Activated naive CD4-positive, alpha-beta T cell treated with anti-CD3 and anti-CD28 coated beads for 36 hours (primary cell): ENCODE measurements at regions of chr17 and their contacts with region 1.

Region 1: DNA sequence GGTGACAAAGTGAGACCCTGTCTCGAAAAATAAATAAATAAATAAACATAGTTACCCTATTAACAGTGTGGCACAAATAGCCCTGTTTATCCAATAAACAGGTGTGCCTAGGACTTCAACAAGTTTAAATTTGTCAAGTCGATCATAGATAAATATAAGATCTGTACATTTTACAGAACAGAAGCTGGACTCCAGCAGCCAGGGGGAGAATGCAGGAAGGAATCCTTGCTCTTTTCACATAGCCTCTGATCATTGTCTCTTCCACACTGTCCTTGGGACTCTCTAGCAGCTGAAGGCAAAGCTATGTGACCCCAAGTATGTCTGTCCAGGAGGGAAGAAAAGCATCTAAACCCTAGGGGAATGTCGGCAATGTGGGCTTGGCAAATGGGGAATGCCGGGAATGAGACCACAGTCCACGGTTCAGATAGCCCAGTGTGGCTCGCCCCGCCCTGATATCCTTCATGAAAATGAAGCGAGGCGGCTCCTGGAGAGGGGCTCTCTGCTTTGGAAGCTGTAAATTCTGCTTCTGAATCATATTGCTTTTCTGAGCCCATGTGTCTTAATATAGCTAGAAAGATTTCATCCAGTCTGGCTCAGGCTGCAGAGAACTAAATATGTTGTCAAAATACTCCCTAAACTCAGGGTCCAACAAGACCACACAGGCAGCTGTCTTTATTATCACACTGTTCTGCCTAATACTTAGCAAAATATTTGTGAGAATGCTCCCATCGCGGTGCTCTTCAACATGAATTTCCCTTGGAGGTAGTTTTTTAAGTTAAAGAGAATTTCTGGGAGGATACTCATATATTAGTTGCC is 24.9 kb upstream of the GRB2 start:
- DNase-seq: no peak
- H3K4me3 Mint-ChIP-seq: no peak overlapping the region
- H3K27ac Mint-ChIP-seq: no peak overlapping the region
- H3K4me1 Mint-ChIP-seq: peaks cover 8% of the 10 kb centered on the region
- H3K27me3 Mint-ChIP-seq: peaks cover 2% of the 10 kb centered on the region

Region 2: GRCh38 chr17:75487351-75488070 is 57.1 kb after region 1 on chr17:
- CTCF ChIA-PET with region 1: interaction called, 4 read pairs
- intact Hi-C with region 1: loop called (anchors 5 kb)
- DNase-seq: peak; percentile 63
- H3K4me3 Mint-ChIP-seq: peak overlapping the region; percentile 19
- H3K27ac Mint-ChIP-seq: peak overlapping the region; percentile 91
- H3K4me1 Mint-ChIP-seq: peaks cover 29% of the 10 kb centered on the region
- H3K27me3 Mint-ChIP-seq: no peaks in the 10 kb centered on the region

Region 3: GRCh38 chr17:75524953-75525719 is 94.8 kb after region 1 on chr17 and contains the start of gene LLGL2:
- CTCF ChIA-PET with region 1: interaction called, 4 read pairs
- intact Hi-C with region 1: loop called (anchors 2 kb)
- DNase-seq: peak; percentile 74
- H3K4me3 Mint-ChIP-seq: peak within 1 kb of the TSS; percentile 58
- H3K27ac Mint-ChIP-seq: no peak within 1 kb of the TSS
- H3K4me1 Mint-ChIP-seq: peaks cover 9% of the 10 kb centered on the region
- H3K27me3 Mint-ChIP-seq: no peaks in the 10 kb centered on the region
- total RNA-seq, gene LLGL2: 6.2 to 6.8 TPM

Region 4: GRCh38 chr17:75927286-75927922 is 497.0 kb after region 1 on chr17:
- CTCF ChIA-PET with region 1: no interaction called
- intact Hi-C with region 1: no loop called
- DNase-seq: no peak
- H3K4me3 Mint-ChIP-seq: no peak overlapping the region
- H3K27ac Mint-ChIP-seq: no peak overlapping the region
- H3K4me1 Mint-ChIP-seq: no peaks in the 10 kb centered on the region
- H3K27me3 Mint-ChIP-seq: no peaks in the 10 kb centered on the region